CD4-positive, alpha-beta memory T cell (primary cell): ENCODE measurements at regions of chr19 and their contacts with region 1.

Region 1: GRCh38 chr19:17470068-17470841 is at the start of gene SLC27A1:
- DNase-seq: peak; percentile 85 to 93 (median 87)
- H3K4me3 ChIP-seq: peak within 1 kb of the TSS; percentile 91 to 93
- H3K4me3 Mint-ChIP-seq: peak within 1 kb of the TSS; percentile 95 to 100 (median 96)
- H3K27ac ChIP-seq: peak within 1 kb of the TSS; percentile 65
- H3K27ac Mint-ChIP-seq: peak within 1 kb of the TSS; percentile 82 to 99 (median 96)
- H3K4me1 ChIP-seq: peaks cover 15% of the 10 kb centered on the region
- H3K4me1 Mint-ChIP-seq: peaks cover 9 to 42% (median 22%) of the 10 kb centered on the region in 4 donors
- H3K27me3 ChIP-seq: no peaks in the 10 kb centered on the region
- H3K27me3 Mint-ChIP-seq: no peaks in the 10 kb centered on the region
- total RNA-seq, gene SLC27A1: 9.2 to 10.1 TPM

Region 2: GRCh38 chr19:17292286-17293097 is 177.8 kb before region 1 on chr19:
- CTCF ChIA-PET with region 1: no interaction called
- POLR2A ChIA-PET with region 1: no interaction called
- intact Hi-C with region 1: loop called (anchors 2 kb)
- DNase-seq: peak; percentile 77 to 85 (median 80)
- H3K4me3 ChIP-seq: peak overlapping the region; percentile 61 to 75
- H3K4me3 Mint-ChIP-seq: peak overlapping the region; percentile 88 to 92 (median 90)
- H3K27ac ChIP-seq: peak overlapping the region; percentile 20
- H3K27ac Mint-ChIP-seq: peak overlapping the region; percentile 47 to 89 (median 81)
- H3K4me1 ChIP-seq: peaks cover 6% of the 10 kb centered on the region
- H3K4me1 Mint-ChIP-seq: peaks cover 3 to 5% (median 4%) of the 10 kb centered on the region in 4 donors
- H3K27me3 ChIP-seq: no peaks in the 10 kb centered on the region
- H3K27me3 Mint-ChIP-seq: peaks cover 0 to 4% of the 10 kb centered on the region in 2 donors

Region 3: DNA sequence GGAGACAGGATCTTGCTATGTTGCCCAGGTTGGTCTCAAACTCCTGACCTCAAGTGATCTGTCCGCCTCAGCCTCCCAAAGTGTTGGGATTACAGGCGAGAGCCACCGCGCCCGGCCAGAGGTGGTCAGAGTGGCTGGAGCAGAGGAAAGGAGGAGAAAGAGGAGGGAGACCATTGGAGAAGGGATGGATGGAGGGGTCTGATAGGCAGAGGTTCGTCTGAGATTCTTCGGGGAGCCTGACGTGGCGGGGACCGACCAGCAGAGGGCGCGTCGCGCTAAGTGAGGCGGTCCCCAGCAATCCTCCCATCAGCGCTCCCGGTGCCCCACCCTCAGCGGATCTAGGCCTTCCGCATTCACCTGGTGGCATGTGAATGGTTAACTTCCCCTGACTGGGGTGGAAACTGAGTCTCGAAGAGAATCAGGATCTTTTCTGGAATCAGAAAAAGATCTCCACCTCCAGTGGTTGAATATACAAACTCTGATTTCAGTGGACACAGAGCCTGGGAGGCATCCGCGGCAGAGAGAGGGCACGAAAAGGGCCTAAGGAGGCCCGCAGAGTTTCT is 124.1 kb before region 1 on chr19:
- CTCF ChIA-PET with region 1: interaction called, 18 read pairs
- POLR2A ChIA-PET with region 1: no interaction called
- intact Hi-C with region 1: no loop called
- DNase-seq: peak in 4 of 5 donors; percentile 66 to 71 (median 68)
- H3K4me3 ChIP-seq: no peak overlapping the region
- H3K4me3 Mint-ChIP-seq: peak overlapping the region in 1 of 8 donors; percentile 29
- H3K27ac ChIP-seq: no peak overlapping the region
- H3K27ac Mint-ChIP-seq: peak overlapping the region in 1 of 7 donors; percentile 46
- H3K4me1 ChIP-seq: no peaks in the 10 kb centered on the region
- H3K4me1 Mint-ChIP-seq: peaks cover 5 to 7% (median 6%) of the 10 kb centered on the region in 4 donors
- H3K27me3 ChIP-seq: no peaks in the 10 kb centered on the region
- H3K27me3 Mint-ChIP-seq: peaks cover 10 to 11% of the 10 kb centered on the region in 2 donors

Region 4: DNA sequence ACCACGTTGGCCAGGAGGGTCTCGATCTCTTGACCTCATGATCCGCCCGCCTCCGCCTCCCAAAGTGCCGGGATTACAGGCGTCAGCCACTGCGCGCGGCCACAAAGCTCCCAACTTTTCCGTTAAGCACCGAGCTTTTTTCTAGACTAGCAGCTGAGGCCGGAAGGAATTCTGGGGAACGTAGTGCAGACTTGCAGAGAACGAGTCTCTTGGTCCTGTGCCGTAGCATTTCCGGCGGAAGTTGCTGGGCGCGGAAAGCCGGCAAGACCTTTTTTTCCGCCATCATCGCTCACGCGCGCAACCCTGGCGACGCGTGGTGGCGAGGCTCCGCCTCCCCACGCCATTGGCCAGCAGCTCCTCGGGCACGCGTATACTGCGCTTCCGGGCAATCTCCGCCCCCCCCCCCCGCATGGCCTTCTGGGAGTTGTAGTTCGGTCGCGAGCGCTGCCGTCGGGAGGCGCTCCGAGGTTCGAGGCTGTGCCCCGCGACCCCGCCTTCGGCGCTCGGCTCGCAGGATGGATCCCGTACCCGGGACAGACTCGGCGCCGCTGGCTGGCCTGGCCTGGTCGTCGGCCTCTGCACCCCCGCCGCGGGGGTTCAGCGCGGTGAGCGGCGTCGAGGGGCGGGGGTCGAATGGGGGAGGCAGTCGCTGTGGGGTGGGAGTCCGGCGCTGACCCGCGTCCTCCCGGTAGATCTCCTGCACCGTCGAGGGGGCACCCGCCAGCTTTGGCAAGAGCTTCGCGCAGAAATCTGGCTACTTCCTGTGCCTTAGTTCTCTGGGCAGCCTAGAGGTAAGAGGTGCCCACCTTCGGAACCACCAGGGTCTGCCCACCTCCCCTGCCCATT is 50.4 kb before region 1 on chr19 and contains the start of gene MVB12A:
- CTCF ChIA-PET with region 1: interaction called, 7 read pairs
- POLR2A ChIA-PET with region 1: interaction called, 11 read pairs
- intact Hi-C with region 1: no loop called
- DNase-seq: peak; percentile 94 to 98 (median 97)
- H3K4me3 ChIP-seq: peak within 1 kb of the TSS; percentile 69 to 92
- H3K4me3 Mint-ChIP-seq: peak within 1 kb of the TSS; percentile 91 to 97 (median 94)
- H3K27ac ChIP-seq: peak within 1 kb of the TSS; percentile 67
- H3K27ac Mint-ChIP-seq: peak within 1 kb of the TSS; percentile 91 to 96 (median 93)
- H3K4me1 ChIP-seq: peaks cover 17% of the 10 kb centered on the region
- H3K4me1 Mint-ChIP-seq: peaks cover 13 to 26% (median 16%) of the 10 kb centered on the region in 4 donors
- H3K27me3 ChIP-seq: no peaks in the 10 kb centered on the region
- H3K27me3 Mint-ChIP-seq: no peaks in the 10 kb centered on the region
- total RNA-seq, gene MVB12A: 35.4 to 38.0 TPM

Region 5: DNA sequence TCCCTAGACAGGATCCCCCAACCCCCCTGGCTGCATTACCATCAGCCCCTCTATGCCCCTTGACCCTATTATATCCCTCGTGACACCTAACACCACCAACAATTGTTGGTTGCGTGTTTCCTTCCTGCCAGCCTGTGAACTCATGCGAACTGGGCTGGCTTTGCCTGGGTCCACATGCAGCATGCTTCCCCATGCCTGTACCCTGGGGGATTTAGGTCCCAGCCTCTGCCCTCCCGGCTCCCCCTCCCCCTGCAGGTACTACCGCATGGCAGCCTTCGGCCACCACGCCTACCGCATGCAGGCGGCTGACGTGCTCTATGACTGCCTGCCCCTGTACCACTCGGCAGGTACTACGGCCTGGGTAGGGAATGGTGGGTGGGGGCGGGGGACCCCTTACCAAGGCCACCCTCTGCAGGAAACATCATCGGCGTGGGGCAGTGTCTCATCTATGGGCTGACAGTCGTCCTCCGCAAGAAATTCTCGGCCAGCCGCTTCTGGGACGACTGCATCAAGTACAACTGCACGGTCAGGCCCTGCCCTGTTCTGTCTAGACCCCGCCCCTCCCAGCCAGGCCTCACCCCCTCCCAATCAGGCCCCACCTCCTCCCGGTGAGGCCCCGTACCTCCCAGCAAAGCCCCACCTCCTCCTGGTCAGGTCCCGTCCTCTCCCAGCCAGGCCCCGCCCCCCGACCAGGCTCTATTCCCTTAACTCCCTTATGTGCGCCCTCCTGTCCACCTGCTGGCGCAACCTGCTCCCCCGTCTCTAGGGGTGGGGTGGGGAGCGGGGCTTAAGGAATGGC is 18.5 kb after region 1 on chr19:
- CTCF ChIA-PET with region 1: no interaction called
- POLR2A ChIA-PET with region 1: interaction called, 3 read pairs
- intact Hi-C with region 1: loop called (anchors 2 kb)
- DNase-seq: peak; percentile 58 to 81 (median 61)
- H3K4me3 ChIP-seq: no peak overlapping the region
- H3K4me3 Mint-ChIP-seq: peak overlapping the region; percentile 68 to 83 (median 75)
- H3K27ac ChIP-seq: peak overlapping the region; percentile 33
- H3K27ac Mint-ChIP-seq: peak overlapping the region; percentile 67 to 96 (median 91)
- H3K4me1 ChIP-seq: peaks cover 41% of the 10 kb centered on the region
- H3K4me1 Mint-ChIP-seq: peaks cover 21 to 42% (median 31%) of the 10 kb centered on the region in 4 donors
- H3K27me3 ChIP-seq: no peaks in the 10 kb centered on the region
- H3K27me3 Mint-ChIP-seq: no peaks in the 10 kb centered on the region

Region 6: GRCh38 chr19:17511724-17512573 is 41.7 kb after region 1 on chr19:
- CTCF ChIA-PET with region 1: interaction called, 3 read pairs
- POLR2A ChIA-PET with region 1: no interaction called
- intact Hi-C with region 1: loop called (anchors 1 kb)
- DNase-seq: peak; percentile 86 to 90 (median 88)
- H3K4me3 ChIP-seq: peak overlapping the region; percentile 50 to 96
- H3K4me3 Mint-ChIP-seq: peak overlapping the region; percentile 88 to 100 (median 98)
- H3K27ac ChIP-seq: peak overlapping the region; percentile 92
- H3K27ac Mint-ChIP-seq: peak overlapping the region; percentile 90 to 98 (median 95)
- H3K4me1 ChIP-seq: peaks cover 20% of the 10 kb centered on the region
- H3K4me1 Mint-ChIP-seq: peaks cover 17 to 47% (median 30%) of the 10 kb centered on the region in 4 donors
- H3K27me3 ChIP-seq: no peaks in the 10 kb centered on the region
- H3K27me3 Mint-ChIP-seq: no peaks in the 10 kb centered on the region